Activated CD8-positive, alpha-beta T cell treated with anti-CD3 and anti-CD28 coated beads for 36 hours (primary cell): ENCODE measurements at regions of chr6 and their contacts with region 1.

Region 1: GRCh38 chr6:108541838-108542759 is 18.6 kb upstream of the FOXO3 start:
- DNase-seq: peak; percentile 79
- ATAC-seq: peak; percentile 91
- H3K4me3 Mint-ChIP-seq: peak overlapping the region; percentile 48
- H3K27ac Mint-ChIP-seq: no peak overlapping the region
- H3K4me1 Mint-ChIP-seq: peaks cover 13% of the 10 kb centered on the region
- H3K27me3 Mint-ChIP-seq: peaks cover 10% of the 10 kb centered on the region
- CTCF ChIP-seq: peak; percentile 94

Region 2: DNA sequence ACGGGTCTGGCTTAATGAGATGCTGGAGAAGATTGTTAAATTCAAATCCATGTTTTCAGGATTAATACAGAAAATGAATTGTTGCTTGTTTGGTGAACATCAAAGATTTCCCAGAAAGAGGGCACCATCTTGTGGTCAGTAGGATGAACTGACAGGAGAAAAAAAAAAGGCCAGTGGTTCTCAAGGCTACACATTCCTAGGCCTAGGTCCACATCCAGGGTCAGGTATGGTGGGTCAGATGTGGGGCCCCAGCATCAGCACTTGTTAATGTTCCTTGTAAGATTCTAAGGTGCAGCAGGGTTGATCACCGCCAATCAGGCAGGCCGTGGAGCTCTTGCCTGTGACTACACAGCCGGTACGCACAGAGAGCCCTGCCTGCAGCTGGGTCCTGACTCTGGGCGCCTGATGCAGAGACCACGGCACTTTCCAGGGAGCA is 15.3 kb before region 1 on chr6:
- CTCF ChIA-PET with region 1: interaction called, 13 read pairs
- POLR2A ChIA-PET with region 1: no interaction called
- intact Hi-C with region 1: no loop called
- DNase-seq: no peak
- ATAC-seq: no peak
- H3K4me3 Mint-ChIP-seq: no peak overlapping the region
- H3K27ac Mint-ChIP-seq: no peak overlapping the region
- H3K4me1 Mint-ChIP-seq: no peaks in the 10 kb centered on the region
- H3K27me3 Mint-ChIP-seq: no peaks in the 10 kb centered on the region
- CTCF ChIP-seq: peak; percentile 83

Region 3: DNA sequence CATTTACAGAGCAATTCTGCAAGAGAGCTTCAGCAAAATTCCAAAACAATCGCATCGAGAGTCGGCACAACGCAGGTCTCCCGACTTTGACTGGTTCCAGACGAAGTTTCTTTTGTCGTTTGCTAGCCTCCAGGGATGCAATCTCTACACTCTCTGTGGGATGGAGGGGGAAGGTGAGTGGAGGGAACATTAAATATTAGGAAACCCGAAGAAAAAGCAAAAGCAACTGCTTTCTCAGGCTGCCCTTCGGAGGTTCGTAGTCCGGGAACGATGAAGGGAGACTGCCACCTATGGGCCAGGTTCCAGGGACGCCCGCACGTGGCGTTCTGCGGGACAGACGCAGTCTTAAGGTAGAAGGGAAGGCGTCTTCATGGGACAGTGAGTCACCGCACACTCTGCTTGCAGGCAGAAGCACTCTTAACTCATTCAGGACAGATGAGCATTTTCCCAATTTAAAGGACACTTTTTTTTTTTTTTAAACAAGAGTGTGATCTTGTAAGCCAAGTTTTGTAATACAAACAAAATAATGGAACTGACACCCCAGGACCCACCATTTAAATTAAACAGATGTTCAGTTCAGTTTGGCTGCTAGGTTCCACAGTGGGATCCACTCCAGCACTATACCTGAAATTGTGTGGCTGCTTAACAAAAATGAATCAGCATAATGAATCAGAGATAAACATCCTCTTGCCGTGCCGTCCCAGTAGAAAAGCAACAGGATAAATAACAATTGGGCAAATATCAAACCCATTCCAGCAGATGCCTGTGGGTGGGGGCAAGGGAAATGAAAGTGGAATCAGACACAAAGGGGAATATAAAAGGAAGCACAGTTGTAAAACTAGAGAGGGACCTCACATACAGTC is 240.3 kb after region 1 on chr6:
- CTCF ChIA-PET with region 1: interaction called, 22 read pairs
- POLR2A ChIA-PET with region 1: no interaction called
- intact Hi-C with region 1: loop called (anchors 1 kb)
- DNase-seq: peak; percentile 89
- ATAC-seq: peak; percentile 100
- H3K4me3 Mint-ChIP-seq: peak overlapping the region; percentile 67
- H3K27ac Mint-ChIP-seq: no peak overlapping the region
- H3K4me1 Mint-ChIP-seq: peaks cover 9% of the 10 kb centered on the region
- H3K27me3 Mint-ChIP-seq: no peaks in the 10 kb centered on the region
- CTCF ChIP-seq: peak; percentile 74

Region 4: DNA sequence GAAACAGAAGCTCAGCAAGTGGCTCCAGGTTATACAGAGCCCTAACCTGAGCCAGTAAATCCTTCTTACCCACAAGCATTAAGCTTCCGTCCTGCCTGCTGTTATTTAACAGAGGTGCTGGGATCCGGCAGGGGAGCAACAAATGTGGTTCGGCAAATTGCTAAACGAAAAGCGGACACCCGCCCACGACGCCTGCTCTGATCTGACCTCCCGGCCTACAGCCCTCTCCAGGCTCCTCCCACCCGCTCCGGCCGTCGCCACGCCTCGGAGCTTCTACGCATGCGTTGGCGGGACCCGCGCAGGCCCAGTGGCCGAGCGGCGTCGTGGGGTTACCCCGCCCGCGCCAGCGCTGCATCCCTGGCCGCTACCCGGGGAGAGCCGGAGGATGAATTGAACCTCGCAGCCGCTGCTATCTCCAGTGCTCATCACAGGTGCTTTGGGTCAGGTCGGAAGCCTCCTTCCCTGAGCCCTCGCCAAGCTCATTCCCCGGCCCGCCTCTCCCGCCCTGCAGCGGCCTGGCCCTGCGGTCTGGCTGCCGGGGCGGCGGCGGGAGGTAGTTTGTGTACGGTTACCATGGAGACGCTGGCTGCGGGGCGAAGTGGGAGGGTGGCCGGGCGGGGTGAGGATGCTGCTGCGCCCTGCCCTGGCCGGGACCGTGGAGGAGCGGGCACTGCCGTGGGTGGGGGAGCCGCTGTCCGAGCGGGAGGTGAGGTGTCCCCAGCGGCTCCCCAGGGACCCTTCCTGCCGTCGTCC is 306.2 kb after region 1 on chr6 and contains the start of gene ARMC2:
- CTCF ChIA-PET with region 1: interaction called, 10 read pairs
- POLR2A ChIA-PET with region 1: no interaction called
- intact Hi-C with region 1: no loop called
- DNase-seq: peak; percentile 86
- ATAC-seq: peak; percentile 95
- H3K4me3 Mint-ChIP-seq: peak within 1 kb of the TSS; percentile 75
- H3K27ac Mint-ChIP-seq: peak within 1 kb of the TSS; percentile 75
- H3K4me1 Mint-ChIP-seq: peaks cover 33% of the 10 kb centered on the region
- H3K27me3 Mint-ChIP-seq: no peaks in the 10 kb centered on the region
- CTCF ChIP-seq: no peak
- total RNA-seq, gene ARMC2: 2.7 to 4.6 TPM